ENCODE measurements at regions of chr13 and their contacts with region 1.

Region 1: GRCh38 chr13:109786457-109787134 is at the start of gene IRS2:
- DNase-seq: peak; percentile 97
- total RNA-seq, gene IRS2: 12.0 TPM

Region 2: DNA sequence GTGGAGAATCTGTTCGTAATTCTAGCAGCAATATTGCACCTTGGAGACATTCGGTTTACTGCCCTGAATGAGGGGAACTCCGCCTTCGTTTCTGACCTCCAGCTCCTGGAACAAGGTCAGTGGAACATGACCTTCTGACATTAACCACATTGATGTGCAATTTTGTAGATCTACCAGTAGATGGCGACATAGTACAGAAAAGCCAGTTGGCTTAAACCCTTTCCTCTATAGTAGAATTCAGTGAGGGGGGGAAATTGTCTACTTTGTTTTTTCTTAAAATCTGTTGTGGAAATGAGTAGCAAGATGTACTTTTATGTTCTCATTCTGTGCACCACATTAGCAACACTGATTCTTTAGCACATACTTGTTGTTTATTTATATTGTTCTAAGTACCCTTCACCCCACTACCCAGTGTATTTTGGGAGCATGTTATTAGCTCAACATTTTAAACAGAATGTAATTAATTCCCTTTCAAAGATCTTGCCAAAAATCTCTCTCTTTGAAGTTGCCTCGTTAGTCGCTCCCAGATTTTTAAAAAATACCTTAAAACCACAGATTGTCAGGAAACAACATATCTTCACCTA is 825.0 kb before region 1 on chr13:
- intact Hi-C with region 1: loop called (anchors 5 kb)
- DNase-seq: no peak

Region 3: DNA sequence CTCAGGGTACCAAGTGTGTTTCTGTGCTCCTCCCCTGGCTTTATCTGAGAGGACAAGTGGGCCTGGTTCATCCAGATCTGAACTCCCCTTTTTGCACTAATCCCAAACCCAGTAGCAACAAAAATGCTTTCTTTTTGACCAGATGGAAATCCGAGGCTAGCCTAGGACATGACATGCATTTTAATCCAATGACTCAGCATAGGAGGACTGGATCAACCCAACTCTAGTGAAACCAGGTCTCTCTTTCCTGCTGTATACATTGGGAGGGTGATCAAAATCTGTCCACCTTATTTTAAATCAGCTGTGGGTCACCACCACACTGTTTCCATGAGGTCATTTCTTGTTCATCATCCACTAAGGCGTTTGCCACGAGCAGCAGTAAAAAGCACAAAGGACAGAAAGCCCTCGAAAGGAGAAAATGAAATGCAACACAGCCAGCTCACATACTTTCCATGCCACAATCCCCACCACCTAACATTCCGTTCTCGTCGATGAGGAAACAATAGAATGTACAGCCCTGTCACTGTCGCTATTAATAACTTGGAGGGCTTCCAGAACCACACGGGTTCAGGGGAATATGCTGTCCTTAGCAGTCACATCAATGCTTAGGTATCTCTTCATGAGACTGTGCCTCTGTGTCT is 543.2 kb before region 1 on chr13:
- intact Hi-C with region 1: loop called (anchors 10 kb)
- DNase-seq: no peak

Region 4: GRCh38 chr13:109869312-109870237 is 83.0 kb after region 1 on chr13:
- intact Hi-C with region 1: loop called (anchors 5 kb)
- DNase-seq: peak; percentile 87

Region 5: DNA sequence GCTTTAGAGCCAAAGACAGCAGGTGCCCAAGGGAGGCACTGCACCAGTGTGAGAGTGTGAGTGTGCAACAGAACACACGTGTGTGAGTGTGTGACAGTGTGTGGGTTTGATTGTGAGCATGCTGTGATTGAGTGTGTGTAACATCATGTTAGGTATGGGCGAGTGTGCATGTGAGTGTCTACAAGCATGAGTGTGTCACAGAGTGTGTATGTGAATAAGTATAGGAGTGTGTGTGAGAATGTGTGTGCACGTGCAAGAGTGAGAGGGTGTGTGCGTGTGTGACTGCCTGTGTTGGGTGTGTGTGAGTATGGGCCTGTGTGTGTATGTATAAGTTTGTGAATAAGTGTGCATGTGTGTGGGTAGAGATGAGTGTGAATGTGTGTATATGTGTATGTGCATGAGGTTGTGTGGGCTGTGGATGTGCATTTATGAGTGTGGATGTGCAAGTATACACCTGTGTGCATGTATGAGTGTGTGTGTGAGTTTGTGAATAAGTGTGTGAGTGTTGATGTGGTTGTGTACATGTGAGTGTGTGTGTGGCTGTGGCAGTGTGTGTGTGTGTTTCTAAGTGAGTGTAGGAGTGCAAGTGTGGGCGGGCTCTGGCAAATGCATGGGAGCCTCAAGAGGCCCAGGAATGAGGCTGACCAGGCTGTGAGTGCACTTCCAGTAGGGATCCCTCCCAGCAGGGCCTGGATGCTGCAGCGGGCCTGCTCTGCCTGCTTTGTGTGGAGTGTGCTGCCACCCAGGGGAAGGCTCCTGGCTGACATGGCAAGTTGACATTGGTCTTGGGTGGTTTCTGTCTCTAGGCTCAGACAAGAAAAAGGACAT is 322.0 kb after region 1 on chr13:
- intact Hi-C with region 1: loop called (anchors 1 kb)
- DNase-seq: peak; percentile 87

Measured in cardiac septum (tissue), 1 donor.